Heart right ventricle (tissue), 16 donors: ENCODE measurements at regions of chr18 and their contacts with region 1.

Region 1: GRCh38 chr18:33711514-33711913 is 133.5 kb downstream of the ASXL3 start:
- DNase-seq: no peak
- ATAC-seq: no peak
- H3K4me3 ChIP-seq: no peak overlapping the region
- H3K27ac ChIP-seq: no peak overlapping the region
- H3K4me1 ChIP-seq: peaks cover 0 to 15% (median 0%) of the 10 kb centered on the region in 9 donors
- H3K27me3 ChIP-seq: no peaks in the 10 kb centered on the region
- CTCF ChIP-seq: no peak

Region 2: GRCh38 chr18:33579349-33580215 is 131.9 kb before region 1 on chr18:
- intact Hi-C with region 1: loop called in 2 of 10 experiments (anchors 5 to 10 kb)
- DNase-seq: no peak
- ATAC-seq: peak in 6 of 8 donors; percentile 6 to 34 (median 25)
- H3K4me3 ChIP-seq: peak overlapping the region; percentile 34 to 78 (median 60)
- H3K27ac ChIP-seq: peak overlapping the region in 9 of 10 donors; percentile 41 to 95 (median 82)
- H3K4me1 ChIP-seq: peaks cover 0 to 23% (median 8%) of the 10 kb centered on the region in 9 donors
- H3K27me3 ChIP-seq: peaks cover 0 to 36% (median 0%) of the 10 kb centered on the region in 7 donors
- CTCF ChIP-seq: no peak